Activated naive CD4-positive, alpha-beta T cell treated with anti-CD3 and anti-CD28 coated beads for 36 hours (primary cell): ENCODE measurements at regions of chr6 and their contacts with region 1.

Region 1: GRCh38 chr6:78631976-78632375 is 235.4 kb upstream of the IRAK1BP1 start:
- DNase-seq: no peak
- H3K4me3 Mint-ChIP-seq: no peak overlapping the region
- H3K27ac Mint-ChIP-seq: no peak overlapping the region
- H3K4me1 Mint-ChIP-seq: no peaks in the 10 kb centered on the region
- H3K27me3 Mint-ChIP-seq: peaks cover 16% of the 10 kb centered on the region

Region 2: GRCh38 chr6:78059171-78059570 is 572.8 kb before region 1 on chr6:
- CTCF ChIA-PET with region 1: no interaction called
- intact Hi-C with region 1: no loop called
- DNase-seq: no peak
- H3K4me3 Mint-ChIP-seq: no peak overlapping the region
- H3K27ac Mint-ChIP-seq: no peak overlapping the region
- H3K4me1 Mint-ChIP-seq: no peaks in the 10 kb centered on the region
- H3K27me3 Mint-ChIP-seq: no peaks in the 10 kb centered on the region

Region 3: GRCh38 chr6:78615430-78615904 is 16.5 kb before region 1 on chr6:
- CTCF ChIA-PET with region 1: no interaction called
- intact Hi-C with region 1: no loop called
- DNase-seq: no peak
- H3K4me3 Mint-ChIP-seq: no peak overlapping the region
- H3K27ac Mint-ChIP-seq: no peak overlapping the region
- H3K4me1 Mint-ChIP-seq: no peaks in the 10 kb centered on the region
- H3K27me3 Mint-ChIP-seq: peaks cover 3% of the 10 kb centered on the region

Region 4: GRCh38 chr6:78670802-78671201 is 38.8 kb after region 1 on chr6:
- CTCF ChIA-PET with region 1: no interaction called
- intact Hi-C with region 1: loop called (anchors 1 kb)
- DNase-seq: no peak
- H3K4me3 Mint-ChIP-seq: no peak overlapping the region
- H3K27ac Mint-ChIP-seq: no peak overlapping the region
- H3K4me1 Mint-ChIP-seq: no peaks in the 10 kb centered on the region
- H3K27me3 Mint-ChIP-seq: peaks cover 2% of the 10 kb centered on the region